Psoas muscle (tissue), 8 donors: ENCODE measurements at regions of chr7 and their contacts with region 1.

Region 1: GRCh38 chr7:123748734-123749536 is at the start of gene WASL:
- DNase-seq: peak; percentile 94 to 97
- ATAC-seq: peak; percentile 91 to 96 (median 94)
- H3K4me3 ChIP-seq: peak within 1 kb of the TSS; percentile 91
- H3K27ac ChIP-seq: peak within 1 kb of the TSS; percentile 99
- H3K4me1 ChIP-seq: peaks cover 48% of the 10 kb centered on the region
- H3K27me3 ChIP-seq: no peaks in the 10 kb centered on the region
- CTCF ChIP-seq: peak; percentile 11
- total RNA-seq, gene WASL: 28.9 to 37.8 (median 33.8) TPM

Region 2: DNA sequence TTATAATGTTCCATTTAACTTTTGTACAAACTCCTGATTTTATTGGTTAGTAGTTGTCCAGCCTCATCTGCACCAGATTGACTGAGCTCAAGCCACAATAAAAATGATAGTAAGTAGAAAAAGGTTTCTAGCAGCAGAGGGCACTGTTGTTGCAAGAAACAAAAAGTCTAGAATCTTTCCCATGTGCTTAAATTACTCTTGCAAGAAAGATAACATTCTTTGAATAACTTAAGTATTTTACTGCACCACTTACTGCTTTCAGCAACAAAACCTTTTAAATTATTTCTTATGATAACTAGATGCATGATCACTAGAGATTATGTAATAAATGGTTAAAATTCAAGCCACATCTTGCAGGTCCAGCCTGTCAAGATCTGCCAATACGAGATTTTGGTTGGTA is 66.2 kb before region 1 on chr7:
- intact Hi-C with region 1: loop called in 1 of 2 experiments (anchors 10 kb)
- DNase-seq: no peak
- ATAC-seq: peak in 2 of 4 donors; percentile 42 to 54
- H3K4me3 ChIP-seq: no peak overlapping the region
- H3K27ac ChIP-seq: peak overlapping the region; percentile 81
- H3K4me1 ChIP-seq: peaks cover 47% of the 10 kb centered on the region
- H3K27me3 ChIP-seq: no peaks in the 10 kb centered on the region
- CTCF ChIP-seq: peak; percentile 54

Region 3: GRCh38 chr7:123712619-123713018 is 36.3 kb before region 1 on chr7:
- intact Hi-C with region 1: loop called in 1 of 2 experiments (anchors 5 kb)
- DNase-seq: no peak
- ATAC-seq: no peak
- H3K4me3 ChIP-seq: no peak overlapping the region
- H3K27ac ChIP-seq: no peak overlapping the region
- H3K4me1 ChIP-seq: peaks cover 50% of the 10 kb centered on the region
- H3K27me3 ChIP-seq: no peaks in the 10 kb centered on the region
- CTCF ChIP-seq: no peak